Body of pancreas (tissue), 4 donors: ENCODE measurements at regions of chr9 and their contacts with region 1.

Region 1: GRCh38 chr9:69421908-69422801 is 97.1 kb downstream of the ENTREP1 start:
- DNase-seq: peak; percentile 52 to 63 (median 58)
- ATAC-seq: peak; percentile 68
- H3K4me3 ChIP-seq: no peak overlapping the region
- H3K27ac ChIP-seq: no peak overlapping the region
- H3K4me1 ChIP-seq: no peaks in the 10 kb centered on the region
- H3K27me3 ChIP-seq: no peaks in the 10 kb centered on the region
- CTCF ChIP-seq: peak; percentile 32 to 92 (median 86)
- POLR2A ChIP-seq: no peak

Region 2: GRCh38 chr9:69877854-69878514 is 455.8 kb after region 1 on chr9:
- intact Hi-C with region 1: loop called (anchors 5 kb)
- DNase-seq: no peak
- ATAC-seq: peak; percentile 59
- H3K4me3 ChIP-seq: no peak overlapping the region
- H3K27ac ChIP-seq: no peak overlapping the region
- H3K4me1 ChIP-seq: no peaks in the 10 kb centered on the region
- H3K27me3 ChIP-seq: no peaks in the 10 kb centered on the region
- CTCF ChIP-seq: peak; percentile 6 to 75 (median 69)
- POLR2A ChIP-seq: no peak

Region 3: DNA sequence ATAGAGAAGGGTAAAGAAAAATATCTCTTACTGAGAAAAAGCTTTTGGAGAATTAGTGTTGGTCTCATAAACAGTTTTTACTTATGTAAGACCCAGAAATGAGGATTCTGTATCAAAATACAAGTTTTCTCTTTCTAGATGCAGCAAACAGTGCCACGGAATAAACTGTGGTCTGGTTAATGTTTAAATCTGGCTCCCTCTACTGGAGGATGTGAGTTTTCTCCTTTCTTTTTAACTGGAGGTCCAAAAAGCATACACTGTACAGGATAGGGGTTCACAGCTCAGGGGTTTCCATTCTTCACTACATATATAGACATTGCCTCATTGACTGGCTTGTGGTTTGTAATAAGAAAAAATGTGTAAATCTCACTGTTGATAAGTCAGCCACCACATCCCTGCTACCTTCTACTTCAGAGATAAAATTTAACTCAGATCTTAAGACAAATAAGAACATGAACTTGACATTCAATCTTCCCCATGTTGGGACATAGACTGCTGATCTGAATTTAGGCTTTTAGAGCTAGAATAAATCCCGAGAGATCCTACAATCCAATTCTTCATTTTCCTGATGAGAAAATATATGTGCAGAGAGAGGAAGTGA is 497.4 kb after region 1 on chr9:
- intact Hi-C with region 1: loop called (anchors 5 kb)
- DNase-seq: peak in 1 of 4 donors; percentile 7
- ATAC-seq: peak; percentile 74
- H3K4me3 ChIP-seq: no peak overlapping the region
- H3K27ac ChIP-seq: no peak overlapping the region
- H3K4me1 ChIP-seq: no peaks in the 10 kb centered on the region
- H3K27me3 ChIP-seq: no peaks in the 10 kb centered on the region
- CTCF ChIP-seq: peak; percentile 50 to 78 (median 58)
- POLR2A ChIP-seq: no peak